ENCODE measurements at regions of chr5 and their contacts with region 1.

Region 1: DNA sequence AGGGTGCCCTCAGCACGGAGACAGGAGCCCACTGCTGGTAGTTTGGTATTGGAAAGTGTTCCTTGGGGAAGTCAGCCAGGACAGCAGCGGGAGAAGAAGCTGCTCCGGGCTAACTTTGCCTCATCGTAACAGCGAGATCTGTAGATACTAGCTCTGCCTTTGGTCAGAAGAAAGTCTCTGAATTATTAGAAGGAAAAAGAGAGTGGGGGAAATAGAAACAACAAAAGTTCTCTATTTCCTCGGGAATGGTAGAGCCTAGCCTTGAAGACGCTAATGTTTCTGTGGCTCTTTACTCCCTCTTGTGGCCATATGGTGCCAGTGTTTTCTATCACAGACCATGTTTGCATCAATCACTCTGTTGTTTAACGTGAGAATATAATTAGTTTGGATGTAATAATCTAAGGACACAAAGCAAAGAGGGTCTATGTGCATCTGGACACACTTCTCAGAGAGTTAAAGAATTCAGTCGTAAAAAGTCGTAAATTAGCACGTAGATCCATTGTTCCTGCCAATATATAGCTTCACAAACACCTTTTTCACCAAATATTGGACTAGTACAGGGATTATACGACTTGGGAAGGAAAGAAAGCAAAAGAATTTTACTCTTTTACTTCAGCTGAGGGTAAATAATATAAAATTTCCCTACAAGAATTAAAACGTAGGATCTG is 40.2 kb upstream of the HSD17B4 start:
- DNase-seq: peak; percentile 58
- H3K4me3 ChIP-seq: peak overlapping the region; percentile 57 to 62
- H3K27ac ChIP-seq: peak overlapping the region; percentile 80 to 82
- H3K4me1 ChIP-seq: peaks cover 0 to 14% of the 10 kb centered on the region in 2 experiments; a peak in 3 of 4 replicates
- H3K27me3 ChIP-seq: no peaks in the 10 kb centered on the region
- CTCF ChIP-seq: peak; percentile 97
- EP300 ChIP-seq: no peak
- RAD21 ChIP-seq: peak; percentile 91

Region 2: GRCh38 chr5:119022017-119022745 is 389.9 kb before region 1 on chr5:
- CTCF ChIA-PET with region 1: interaction called, 18 read pairs
- POLR2A ChIA-PET with region 1: no interaction called
- DNase-seq: peak; percentile 33
- H3K4me3 ChIP-seq: no peak overlapping the region
- H3K27ac ChIP-seq: no peak overlapping the region
- H3K4me1 ChIP-seq: no peaks in the 10 kb centered on the region; a peak in 1 of 4 replicates
- H3K27me3 ChIP-seq: no peaks in the 10 kb centered on the region
- CTCF ChIP-seq: peak; percentile 69
- EP300 ChIP-seq: no peak
- RAD21 ChIP-seq: peak; percentile 74

Region 3: DNA sequence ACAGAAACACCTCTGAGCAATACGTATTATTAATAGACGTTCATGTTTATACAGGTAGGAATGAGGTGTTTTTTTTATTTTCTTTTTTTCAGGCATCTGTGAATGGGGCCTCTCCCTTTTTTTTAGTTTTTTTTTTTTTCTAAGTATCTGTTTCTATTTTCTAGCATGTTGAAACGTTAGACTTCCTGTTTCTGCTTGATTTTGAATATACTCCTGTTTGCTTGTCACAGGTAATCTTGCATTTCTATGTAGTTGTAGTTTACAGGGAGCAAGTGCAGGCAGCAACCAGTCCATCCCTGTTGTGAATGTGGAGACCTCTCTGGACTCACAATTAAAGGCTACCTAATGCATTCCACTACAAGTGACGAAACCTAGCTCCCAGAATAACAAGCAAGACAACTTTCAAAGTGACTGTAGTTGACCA is 79.1 kb before region 1 on chr5:
- CTCF ChIA-PET with region 1: interaction called, 22 read pairs
- POLR2A ChIA-PET with region 1: no interaction called
- DNase-seq: no peak
- H3K4me3 ChIP-seq: no peak overlapping the region
- H3K27ac ChIP-seq: no peak overlapping the region
- H3K4me1 ChIP-seq: peaks cover 10 to 18% of the 10 kb centered on the region in 2 experiments; a peak in 2 of 4 replicates
- H3K27me3 ChIP-seq: no peaks in the 10 kb centered on the region
- CTCF ChIP-seq: no peak
- EP300 ChIP-seq: no peak
- RAD21 ChIP-seq: no peak

Region 4: DNA sequence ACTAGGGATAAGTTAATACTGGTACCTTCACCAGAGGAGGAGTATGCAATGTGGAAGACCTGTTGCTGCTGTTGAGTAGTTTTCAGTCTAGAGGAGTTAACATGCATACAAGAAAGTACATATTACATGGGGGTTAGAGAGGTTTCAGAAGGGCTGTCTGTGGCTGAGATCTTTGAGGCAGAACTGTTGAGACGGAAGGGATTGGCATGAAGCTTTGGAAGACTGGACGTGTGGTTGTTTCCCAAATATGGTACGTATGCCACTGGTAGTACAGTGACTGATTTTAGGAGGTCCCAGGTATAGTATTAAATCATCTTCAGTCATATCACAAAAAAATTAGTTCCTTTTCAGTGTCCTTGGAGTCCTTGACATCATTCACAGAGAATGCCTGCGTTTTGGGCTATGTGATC is 38.6 kb before region 1 on chr5:
- CTCF ChIA-PET with region 1: interaction called, 11 read pairs
- POLR2A ChIA-PET with region 1: no interaction called
- DNase-seq: no peak
- H3K4me3 ChIP-seq: no peak overlapping the region
- H3K27ac ChIP-seq: no peak overlapping the region
- H3K4me1 ChIP-seq: peaks cover 0 to 16% of the 10 kb centered on the region in 2 experiments
- H3K27me3 ChIP-seq: no peaks in the 10 kb centered on the region
- CTCF ChIP-seq: no peak
- EP300 ChIP-seq: no peak
- RAD21 ChIP-seq: no peak

Region 5: GRCh38 chr5:119435436-119436132 is 23.5 kb after region 1 on chr5:
- CTCF ChIA-PET with region 1: interaction called, 12 read pairs
- POLR2A ChIA-PET with region 1: no interaction called
- DNase-seq: no peak
- H3K4me3 ChIP-seq: no peak overlapping the region
- H3K27ac ChIP-seq: no peak overlapping the region
- H3K4me1 ChIP-seq: no peaks in the 10 kb centered on the region
- H3K27me3 ChIP-seq: no peaks in the 10 kb centered on the region
- CTCF ChIP-seq: peak; percentile 59
- EP300 ChIP-seq: no peak
- RAD21 ChIP-seq: peak; percentile 46

Region 6: GRCh38 chr5:119708076-119708790 is 296.2 kb after region 1 on chr5:
- CTCF ChIA-PET with region 1: no interaction called
- POLR2A ChIA-PET with region 1: no interaction called
- DNase-seq: no peak
- H3K4me3 ChIP-seq: no peak overlapping the region
- H3K27ac ChIP-seq: no peak overlapping the region
- H3K4me1 ChIP-seq: no peaks in the 10 kb centered on the region
- H3K27me3 ChIP-seq: no peaks in the 10 kb centered on the region
- CTCF ChIP-seq: no peak
- EP300 ChIP-seq: no peak
- RAD21 ChIP-seq: no peak